T-cell (primary cell): ENCODE measurements at regions of chr10 and their contacts with region 1.

Region 1: GRCh38 chr10:97869091-97870042 is 19.7 kb downstream of the GOLGA7B start:
- DNase-seq: peak; percentile 69 to 89 (median 80)
- ATAC-seq: peak; percentile 98 to 100 (median 99)
- H3K4me3 ChIP-seq: no peak overlapping the region
- H3K4me3 Mint-ChIP-seq: peak overlapping the region in 2 of 3 donors; percentile 9 to 22
- H3K27ac ChIP-seq: peak overlapping the region; percentile 4
- H3K27ac Mint-ChIP-seq: peak overlapping the region; percentile 84 to 86
- H3K4me1 ChIP-seq: peaks cover 10 to 20% of the 10 kb centered on the region in 2 experiments
- H3K4me1 Mint-ChIP-seq: peaks cover 8 to 16% (median 13%) of the 10 kb centered on the region in 3 donors
- H3K27me3 ChIP-seq: peaks cover 0 to 10% of the 10 kb centered on the region in 2 experiments
- H3K27me3 Mint-ChIP-seq: peaks cover 0 to 3% of the 10 kb centered on the region in 2 donors

Region 2: DNA sequence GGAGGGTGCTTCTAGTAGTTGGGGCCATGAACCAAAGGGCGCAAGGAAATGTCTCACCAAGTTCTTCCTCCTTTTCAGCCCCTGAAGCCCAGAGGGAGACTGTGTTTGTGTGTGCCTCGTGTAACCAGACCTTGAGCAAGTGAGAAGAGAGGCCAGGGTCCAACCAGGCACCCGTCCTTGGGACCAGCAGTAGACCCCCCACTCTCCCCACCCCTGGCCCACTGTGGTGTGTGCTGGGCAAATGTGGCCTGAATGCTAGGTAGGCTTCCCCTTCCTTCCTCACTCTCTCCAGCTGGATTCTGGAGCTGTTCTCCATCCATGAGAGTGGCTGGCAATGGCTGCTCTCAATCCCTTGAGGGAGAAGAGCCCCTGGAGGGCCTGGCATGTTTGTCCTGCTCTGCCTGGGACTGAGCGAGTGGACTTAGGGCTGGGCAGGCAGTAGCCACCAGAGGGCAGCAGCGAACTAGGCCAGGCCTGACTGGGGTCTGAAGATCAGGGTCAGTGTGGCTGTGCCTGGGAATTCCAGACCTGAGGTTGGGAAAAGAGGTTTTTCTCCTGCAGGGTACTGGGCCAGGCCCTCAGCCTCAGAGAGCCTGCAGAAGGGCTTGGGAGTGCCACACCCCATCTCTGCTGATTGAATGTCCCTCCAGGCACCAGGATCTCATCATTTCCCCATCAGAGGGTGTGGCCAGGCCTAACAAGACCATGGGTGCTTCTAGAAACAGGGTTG is 110.0 kb before region 1 on chr10:
- CTCF ChIA-PET with region 1: interaction called in 1 of 2 experiments, 11 read pairs
- POLR2A ChIA-PET with region 1: no interaction called
- DNase-seq: peak in 25 of 35 experiments; percentile 7 to 66 (median 35)
- ATAC-seq: peak; percentile 62 to 71 (median 70)
- H3K4me3 ChIP-seq: no peak overlapping the region
- H3K4me3 Mint-ChIP-seq: no peak overlapping the region
- H3K27ac ChIP-seq: no peak overlapping the region
- H3K27ac Mint-ChIP-seq: no peak overlapping the region
- H3K4me1 ChIP-seq: no peaks in the 10 kb centered on the region
- H3K4me1 Mint-ChIP-seq: no peaks in the 10 kb centered on the region
- H3K27me3 ChIP-seq: no peaks in the 10 kb centered on the region
- H3K27me3 Mint-ChIP-seq: no peaks in the 10 kb centered on the region